Left colon (tissue), 2 donors: ENCODE measurements at regions of chr6 and their contacts with region 1.

Region 1: DNA sequence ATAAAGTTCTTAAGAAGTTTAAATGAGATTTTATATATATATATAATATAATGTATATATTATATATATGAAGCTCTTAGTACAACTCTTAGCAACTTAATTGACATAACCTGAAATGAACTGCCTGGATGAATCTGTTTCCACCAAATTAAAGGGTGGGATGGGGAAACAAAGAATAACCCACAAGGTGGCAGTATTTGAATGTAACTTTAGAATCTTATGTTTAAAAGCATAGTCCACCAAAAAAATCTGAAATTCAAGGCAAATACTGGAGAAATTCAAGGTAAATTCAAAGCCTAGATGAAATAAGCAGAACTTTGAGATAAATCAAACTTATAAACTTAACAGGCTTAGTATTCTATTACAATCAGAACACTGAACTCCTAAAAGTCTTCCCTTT is 4.4 kb upstream of the IBTK start:
- DNase-seq: no peak
- ATAC-seq: no peak

Region 2: GRCh38 chr6:83057705-83058321 is 805.9 kb after region 1 on chr6:
- intact Hi-C with region 1: loop called in 1 of 2 experiments (anchors 5 kb)
- DNase-seq: peak in 1 of 2 donors; percentile 21
- ATAC-seq: peak; percentile 76